ENCODE measurements at regions of chr3 and their contacts with region 1.

Region 1: GRCh38 chr3:61725851-61726333 is 164.5 kb downstream of the PTPRG start:
- DNase-seq: peak; percentile 84
- ATAC-seq: peak; percentile 93
- H3K4me3 ChIP-seq: no peak overlapping the region
- H3K27ac ChIP-seq: no peak overlapping the region
- H3K4me1 ChIP-seq: peaks cover 5% of the 10 kb centered on the region
- H3K27me3 ChIP-seq: no peaks in the 10 kb centered on the region
- CTCF ChIP-seq: no peak
- POLR2A ChIP-seq: no peak
- RAD21 ChIP-seq: no peak

Region 2: DNA sequence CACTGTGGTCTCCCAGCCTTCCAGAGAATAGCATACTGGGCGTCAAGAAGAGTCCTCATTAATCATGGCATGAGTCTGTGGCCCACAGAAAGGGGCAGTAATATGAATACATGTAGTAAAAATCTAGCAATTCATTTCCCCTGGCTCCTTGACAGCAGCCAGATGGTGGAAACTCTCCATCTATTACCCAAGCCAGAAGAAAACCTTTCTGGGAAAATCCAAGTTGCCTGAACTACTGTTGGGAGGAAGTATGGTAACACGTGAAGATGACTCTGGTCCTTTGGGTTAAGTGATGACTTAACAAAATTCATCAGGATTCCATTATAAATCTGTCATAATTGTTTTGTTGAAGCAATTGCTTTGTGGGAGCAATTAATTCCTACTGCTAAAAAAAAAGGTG is 1005.2 kb before region 1 on chr3:
- CTCF ChIA-PET with region 1: no interaction called
- POLR2A ChIA-PET with region 1: no interaction called
- dilution Hi-C with region 1: no loop called
- in situ Hi-C with region 1: no loop called
- intact Hi-C with region 1: loop called (anchors 5 kb)
- DNase-seq: no peak
- ATAC-seq: no peak
- H3K4me3 ChIP-seq: no peak overlapping the region
- H3K27ac ChIP-seq: no peak overlapping the region
- H3K4me1 ChIP-seq: no peaks in the 10 kb centered on the region
- H3K27me3 ChIP-seq: no peaks in the 10 kb centered on the region
- CTCF ChIP-seq: no peak
- POLR2A ChIP-seq: no peak
- RAD21 ChIP-seq: no peak

Region 3: GRCh38 chr3:62374341-62375218 is 648.7 kb after region 1 on chr3:
- CTCF ChIA-PET with region 1: no interaction called
- POLR2A ChIA-PET with region 1: no interaction called
- dilution Hi-C with region 1: no loop called
- in situ Hi-C with region 1: no loop called
- intact Hi-C with region 1: no loop called
- DNase-seq: peak; percentile 6
- ATAC-seq: 0 out of 2 replicates have a peak, but pooled peaks have one; percentile 30
- H3K4me3 ChIP-seq: no peak overlapping the region
- H3K27ac ChIP-seq: no peak overlapping the region
- H3K4me1 ChIP-seq: no peaks in the 10 kb centered on the region
- H3K27me3 ChIP-seq: peaks cover 92% of the 10 kb centered on the region
- CTCF ChIP-seq: no peak
- POLR2A ChIP-seq: no peak
- RAD21 ChIP-seq: no peak